Body of pancreas (tissue), 4 donors: ENCODE measurements at regions of chr15 and their contacts with region 1.

Region 1: GRCh38 chr15:70488002-70488605 is 275.3 kb downstream of the UACA start:
- DNase-seq: peak; percentile 70 to 80 (median 77)
- ATAC-seq: peak; percentile 80
- H3K4me3 ChIP-seq: no peak overlapping the region
- H3K27ac ChIP-seq: no peak overlapping the region
- H3K4me1 ChIP-seq: no peaks in the 10 kb centered on the region
- H3K27me3 ChIP-seq: no peaks in the 10 kb centered on the region
- CTCF ChIP-seq: peak; percentile 85 to 96 (median 93)
- POLR2A ChIP-seq: no peak

Region 2: DNA sequence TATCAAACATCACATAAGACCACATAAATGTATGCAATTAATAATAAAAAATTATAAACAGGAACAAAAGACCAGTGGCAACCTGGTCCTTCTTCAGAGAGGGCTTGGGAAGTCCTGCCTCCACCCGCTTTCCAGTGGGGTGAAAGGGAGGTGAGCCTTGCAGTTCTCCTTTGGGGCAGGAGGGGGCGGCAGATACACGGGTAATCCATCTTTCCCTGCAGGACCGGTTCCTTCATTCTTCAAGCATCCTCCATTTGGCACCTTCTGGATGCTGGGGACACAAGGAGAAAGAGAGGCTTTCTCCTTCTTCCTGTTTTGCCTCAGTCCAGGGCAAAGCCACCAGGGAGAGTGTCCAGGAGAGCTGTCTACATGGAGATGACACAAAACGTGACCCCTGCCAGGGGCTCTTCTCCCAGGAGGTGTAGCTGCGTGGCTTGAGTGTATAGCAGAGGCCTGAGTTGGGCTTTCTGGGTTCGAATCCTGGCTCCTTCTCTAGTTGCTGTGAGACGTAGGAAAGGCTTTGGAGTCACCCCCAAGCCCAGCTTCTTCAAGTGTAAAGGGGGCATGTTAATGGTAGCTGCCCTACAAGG is 1012.2 kb before region 1 on chr15:
- intact Hi-C with region 1: loop called (anchors 5 kb)
- DNase-seq: peak; percentile 81 to 88 (median 83)
- ATAC-seq: peak; percentile 91
- H3K4me3 ChIP-seq: no peak overlapping the region
- H3K27ac ChIP-seq: no peak overlapping the region
- H3K4me1 ChIP-seq: no peaks in the 10 kb centered on the region
- H3K27me3 ChIP-seq: no peaks in the 10 kb centered on the region
- CTCF ChIP-seq: peak; percentile 75 to 97 (median 93)
- POLR2A ChIP-seq: no peak

Region 3: GRCh38 chr15:69576035-69576526 is 912.0 kb before region 1 on chr15:
- intact Hi-C with region 1: loop called (anchors 10 kb)
- DNase-seq: peak; percentile 73 to 84 (median 76)
- ATAC-seq: peak; percentile 74
- H3K4me3 ChIP-seq: no peak overlapping the region
- H3K27ac ChIP-seq: peak overlapping the region in 1 of 4 donors; percentile 35
- H3K4me1 ChIP-seq: peaks cover 46% of the 10 kb centered on the region
- H3K27me3 ChIP-seq: no peaks in the 10 kb centered on the region
- CTCF ChIP-seq: peak; percentile 59 to 93 (median 87)
- POLR2A ChIP-seq: no peak

Region 4: DNA sequence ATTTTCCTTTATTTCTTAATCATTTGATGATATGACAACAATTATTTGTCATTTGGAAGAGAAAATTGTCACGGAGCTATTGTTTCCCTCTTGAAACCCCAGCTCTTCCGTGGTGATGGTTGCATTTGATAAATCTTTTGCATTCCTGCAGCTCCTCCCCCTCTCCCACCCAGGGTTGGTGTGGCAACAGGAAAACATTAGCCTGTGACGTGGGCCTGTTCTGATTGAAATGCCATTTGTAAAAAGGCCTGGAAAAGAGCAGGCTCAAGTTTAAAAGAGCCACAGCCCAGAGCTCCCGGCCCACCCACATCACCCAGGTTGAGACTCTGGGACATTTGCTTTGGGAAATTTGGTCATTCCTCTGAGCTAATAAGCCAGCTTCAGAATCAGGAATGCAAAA is 753.0 kb before region 1 on chr15:
- intact Hi-C with region 1: loop called (anchors 10 kb)
- DNase-seq: peak; percentile 31 to 55 (median 44)
- ATAC-seq: peak; percentile 75
- H3K4me3 ChIP-seq: no peak overlapping the region
- H3K27ac ChIP-seq: peak overlapping the region in 1 of 4 donors; percentile 8
- H3K4me1 ChIP-seq: peaks cover 4% of the 10 kb centered on the region
- H3K27me3 ChIP-seq: no peaks in the 10 kb centered on the region
- CTCF ChIP-seq: no peak
- POLR2A ChIP-seq: no peak